Posterior vena cava (tissue), 2 donors: ENCODE measurements at regions of chr12 and their contacts with region 1.

Region 1: DNA sequence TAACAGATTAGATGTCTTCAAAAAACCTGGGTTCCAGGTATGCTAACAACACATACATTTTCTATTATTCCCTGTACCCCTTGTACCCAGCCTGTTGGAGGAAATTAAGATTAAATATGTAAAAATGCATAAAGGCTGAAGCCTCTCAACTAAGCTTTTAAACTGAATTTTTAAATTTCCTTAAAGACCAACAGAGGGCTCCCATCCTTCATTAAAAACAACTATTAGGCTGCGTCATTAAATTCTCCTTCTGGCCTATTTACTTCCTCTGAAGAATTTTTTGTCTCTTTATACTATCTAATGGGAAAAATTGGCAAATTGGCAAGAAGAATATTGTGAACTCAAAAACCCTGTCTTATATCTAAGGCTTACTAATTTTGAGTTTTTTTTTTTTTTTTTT is 21.8 kb downstream of the SENP1 start:
- DNase-seq: no peak

Region 2: DNA sequence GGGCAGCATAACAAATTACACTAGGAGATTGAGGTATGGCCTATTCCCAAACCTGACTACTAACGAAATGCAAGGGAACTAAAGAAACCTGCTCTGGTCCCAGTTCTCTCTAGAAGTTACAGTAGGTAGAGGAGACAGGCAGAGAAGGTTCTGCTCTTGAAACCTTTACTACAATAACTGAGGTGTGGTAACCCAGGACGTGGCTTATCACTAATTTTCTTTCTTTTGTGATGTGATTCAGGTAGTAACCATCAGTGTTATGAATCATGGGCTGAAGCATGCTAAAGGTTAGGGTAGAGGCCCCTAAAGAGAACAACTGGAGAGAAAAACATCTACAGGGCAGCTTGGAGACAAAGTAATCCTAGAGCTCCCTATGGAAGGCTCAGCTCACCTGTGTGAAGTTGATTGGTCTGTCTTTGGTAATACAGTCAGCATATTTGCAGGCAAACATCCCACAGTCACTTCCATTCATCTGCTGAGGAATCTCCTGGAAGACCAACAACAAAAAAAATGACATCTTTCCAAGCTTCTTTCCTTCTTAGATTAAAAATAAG is 38.0 kb before region 1 on chr12:
- intact Hi-C with region 1: no loop called
- DNase-seq: no peak

Region 3: GRCh38 chr12:48118284-48118890 is 34.3 kb after region 1 on chr12:
- intact Hi-C with region 1: no loop called
- DNase-seq: no peak

Region 4: DNA sequence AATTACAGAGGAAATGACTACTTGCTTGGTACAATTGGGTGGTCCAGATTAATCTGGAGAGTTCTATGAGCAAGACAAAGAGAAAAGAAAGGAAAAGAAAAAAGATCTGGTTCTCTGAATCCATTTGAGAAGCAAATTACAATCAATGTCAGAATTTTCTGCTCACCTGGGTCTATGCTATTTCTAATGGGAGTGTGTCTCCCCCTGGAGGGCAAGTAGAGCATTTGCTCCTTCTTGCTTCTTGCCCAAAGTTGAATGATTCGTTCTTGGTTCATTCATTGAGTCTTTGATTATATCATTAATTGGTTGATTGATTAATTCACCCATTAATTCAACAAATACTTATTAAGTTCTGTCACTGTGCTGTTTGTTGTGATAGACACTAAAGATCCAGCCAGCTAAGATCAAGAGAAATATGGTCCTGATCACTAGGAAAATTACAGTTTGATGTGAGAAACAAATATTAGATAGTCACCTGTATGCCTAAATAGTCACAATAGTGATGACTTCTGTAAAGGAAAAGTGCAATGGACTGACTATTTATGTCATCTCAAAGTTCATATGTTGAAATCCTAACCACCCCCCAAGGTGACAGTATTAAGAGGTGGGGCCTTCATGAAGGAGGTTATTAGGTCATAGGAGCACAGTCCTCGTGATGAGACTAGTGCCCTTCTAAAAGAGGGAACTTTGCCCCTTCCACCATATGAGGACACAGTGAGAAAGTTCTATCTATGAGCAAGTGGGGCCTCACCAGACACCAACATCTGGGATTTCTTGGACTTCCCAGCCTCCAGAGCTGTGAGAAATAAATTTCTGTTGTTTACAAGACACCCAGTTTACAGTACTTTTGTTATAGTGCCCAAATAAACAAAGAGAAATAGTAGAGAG is 81.3 kb after region 1 on chr12:
- intact Hi-C with region 1: loop called in 1 of 2 experiments (anchors 10 kb)
- DNase-seq: no peak